ENCODE measurements at regions of chr7 and their contacts with region 1.

Region 1: DNA sequence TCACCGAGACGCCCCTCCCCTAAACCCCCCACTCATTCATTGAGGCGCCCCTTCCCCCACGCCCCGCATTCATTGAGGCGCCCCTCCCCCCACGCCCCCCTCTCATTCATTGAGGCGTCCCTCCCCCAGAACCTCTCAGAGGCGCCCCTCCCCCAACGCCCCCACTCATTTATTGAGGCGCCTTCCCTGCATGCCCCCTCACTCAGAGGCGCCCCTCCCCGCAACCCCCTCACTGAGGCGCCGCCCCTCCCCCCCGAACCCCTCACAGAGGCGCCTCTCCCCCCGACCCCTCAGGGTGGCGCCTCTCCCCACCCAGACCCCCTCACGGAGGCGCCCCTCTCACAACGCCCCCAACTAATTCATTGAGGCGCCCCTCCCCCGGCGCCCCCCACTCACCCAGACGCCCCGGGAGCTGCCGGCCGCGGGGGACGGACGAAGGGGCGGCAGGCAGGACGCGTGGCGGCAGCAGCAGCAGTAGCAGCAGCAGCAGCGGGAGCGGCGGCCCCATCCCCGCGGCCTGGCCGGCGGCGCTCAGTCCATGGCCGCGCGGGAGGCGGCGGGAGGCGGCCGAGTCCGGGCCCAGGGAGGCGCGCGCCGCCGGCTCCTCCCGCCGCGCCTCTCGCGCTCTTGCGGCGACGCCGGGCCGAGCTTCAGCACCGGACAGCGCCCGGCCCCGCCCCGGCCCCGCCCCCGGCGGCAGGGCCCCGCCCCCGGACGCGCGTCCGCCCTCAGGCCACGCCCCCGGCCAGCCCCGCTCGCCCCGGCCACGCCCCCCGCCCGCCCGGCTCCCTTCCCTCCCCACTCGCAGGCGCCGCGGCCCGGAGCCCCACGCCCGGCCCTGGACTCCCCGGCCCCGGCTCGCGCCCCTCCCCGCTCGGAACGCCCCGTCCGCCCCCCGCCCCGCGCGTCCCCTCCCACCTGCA is at the start of gene PTPRN2:
- DNase-seq: peak; percentile 41
- ATAC-seq: peak; percentile 78
- H3K4me3 ChIP-seq: no peak within 1 kb of the TSS
- H3K27ac ChIP-seq: no peak within 1 kb of the TSS
- H3K4me1 ChIP-seq: no peaks in the 10 kb centered on the region
- H3K27me3 ChIP-seq: peaks cover 31% of the 10 kb centered on the region; the same call in 1 of the 2 replicates
- CTCF ChIP-seq: no peak
- total RNA-seq, gene PTPRN2: 3.2 and 3.6 TPM in 2 replicates

Region 2: GRCh38 chr7:157425079-157425731 is 1162.2 kb before region 1 on chr7:
- CTCF ChIA-PET with region 1: no interaction called
- POLR2A ChIA-PET with region 1: no interaction called
- intact Hi-C with region 1: no loop called
- DNase-seq: no peak
- ATAC-seq: peak; percentile 30; the same call in 1 of the 2 replicates
- H3K4me3 ChIP-seq: no peak overlapping the region
- H3K27ac ChIP-seq: no peak overlapping the region
- H3K4me1 ChIP-seq: no peaks in the 10 kb centered on the region
- H3K27me3 ChIP-seq: no peaks in the 10 kb centered on the region
- CTCF ChIP-seq: no peak

Region 3: DNA sequence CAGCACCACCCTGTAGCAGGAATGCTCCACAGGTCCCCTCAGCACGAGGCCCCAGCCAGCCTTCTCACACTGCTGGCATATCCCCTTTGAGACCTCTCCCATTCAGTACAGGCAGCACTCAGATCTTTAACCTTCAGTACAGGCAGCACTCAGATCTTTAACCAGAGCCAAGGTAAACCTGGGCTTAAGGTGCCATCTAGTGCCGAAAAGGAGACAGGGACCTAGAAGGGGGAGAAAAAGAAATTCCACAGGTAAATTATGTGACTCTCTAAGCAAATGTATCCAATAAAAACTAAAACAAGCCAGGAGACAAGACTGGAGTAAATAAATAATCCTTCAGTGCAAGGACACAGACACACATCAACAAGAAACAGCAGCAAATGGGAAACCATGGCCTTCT is 358.4 kb before region 1 on chr7:
- CTCF ChIA-PET with region 1: no interaction called
- POLR2A ChIA-PET with region 1: no interaction called
- intact Hi-C with region 1: no loop called
- DNase-seq: peak; percentile 49
- ATAC-seq: no peak
- H3K4me3 ChIP-seq: no peak overlapping the region
- H3K27ac ChIP-seq: no peak overlapping the region
- H3K4me1 ChIP-seq: peaks cover 9% of the 10 kb centered on the region
- H3K27me3 ChIP-seq: no peaks in the 10 kb centered on the region
- CTCF ChIP-seq: peak; percentile 56

Region 4: GRCh38 chr7:158431941-158432347 is 155.5 kb before region 1 on chr7:
- CTCF ChIA-PET with region 1: no interaction called
- POLR2A ChIA-PET with region 1: no interaction called
- intact Hi-C with region 1: loop called (anchors 10 kb)
- DNase-seq: peak; percentile 90
- ATAC-seq: peak; percentile 78
- H3K4me3 ChIP-seq: peak overlapping the region; percentile 52
- H3K27ac ChIP-seq: peak overlapping the region; percentile 99
- H3K4me1 ChIP-seq: peaks cover 19% of the 10 kb centered on the region
- H3K27me3 ChIP-seq: peaks cover 13% of the 10 kb centered on the region; the same call in 1 of the 2 replicates
- CTCF ChIP-seq: no peak

Region 5: GRCh38 chr7:158495786-158496185 is 91.6 kb before region 1 on chr7:
- CTCF ChIA-PET with region 1: no interaction called
- POLR2A ChIA-PET with region 1: no interaction called
- intact Hi-C with region 1: loop called (anchors 10 kb)
- DNase-seq: peak; percentile 35
- ATAC-seq: peak; percentile 66
- H3K4me3 ChIP-seq: no peak overlapping the region
- H3K27ac ChIP-seq: no peak overlapping the region
- H3K4me1 ChIP-seq: no peaks in the 10 kb centered on the region
- H3K27me3 ChIP-seq: no peaks in the 10 kb centered on the region
- CTCF ChIP-seq: peak; percentile 21; the same call in 1 of the 2 replicates